Calu3 (cell line): ENCODE measurements at regions of chr4 and their contacts with region 1.

Region 1: GRCh38 chr4:53804719-53805118 is 213.4 kb upstream of the LNX1 start:
- DNase-seq: peak; percentile 54
- H3K4me3 Mint-ChIP-seq: no peak overlapping the region
- H3K27ac Mint-ChIP-seq: no peak overlapping the region
- H3K4me1 Mint-ChIP-seq: no peaks in the 10 kb centered on the region
- H3K27me3 Mint-ChIP-seq: peaks cover 40% of the 10 kb centered on the region
- CTCF ChIP-seq: no peak

Region 2: DNA sequence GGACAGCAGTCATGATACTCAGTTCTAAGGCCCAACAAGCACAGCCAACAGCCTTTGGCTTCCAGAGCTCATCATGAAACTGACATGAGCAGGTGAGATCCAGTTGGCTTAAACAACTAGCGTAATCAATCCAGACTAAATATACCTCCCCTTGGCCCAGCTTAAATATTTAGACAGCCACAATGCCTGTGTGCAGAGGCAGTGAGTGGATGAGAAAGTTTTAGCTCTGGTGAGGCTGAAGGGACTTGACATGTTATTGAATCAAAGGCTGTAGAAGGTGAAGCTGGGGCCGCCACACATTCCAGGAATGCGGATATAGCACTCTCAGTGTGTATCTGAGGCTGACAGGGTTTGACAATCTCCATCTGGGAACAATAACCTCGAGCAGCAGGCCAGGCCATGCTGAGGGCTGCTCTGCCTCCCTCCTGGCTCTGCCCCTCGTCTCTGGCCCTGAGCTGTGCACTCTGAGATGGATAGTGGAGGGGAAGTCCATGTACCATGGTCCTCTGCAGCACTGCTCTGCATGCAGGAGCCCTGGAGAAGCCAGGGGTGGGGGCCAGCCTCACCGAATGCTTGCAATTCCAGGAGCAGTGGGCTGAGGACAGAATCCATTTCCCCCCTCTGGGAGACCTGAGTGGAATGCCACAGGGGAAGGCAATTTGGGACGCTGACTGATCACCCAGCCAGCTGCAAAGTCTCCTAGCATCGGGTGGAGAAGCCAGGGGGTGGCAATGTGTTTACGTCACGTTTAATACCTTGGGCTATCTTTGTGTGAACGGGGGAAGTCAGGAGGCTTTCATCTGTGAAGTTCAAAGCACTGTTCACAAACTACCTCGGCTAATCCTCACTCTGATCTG is 979.9 kb before region 1 on chr4:
- CTCF ChIA-PET with region 1: no interaction called
- intact Hi-C with region 1: no loop called
- DNase-seq: peak; percentile 22
- H3K4me3 Mint-ChIP-seq: no peak overlapping the region
- H3K27ac Mint-ChIP-seq: no peak overlapping the region
- H3K4me1 Mint-ChIP-seq: peaks cover 26% of the 10 kb centered on the region
- H3K27me3 Mint-ChIP-seq: no peaks in the 10 kb centered on the region
- CTCF ChIP-seq: no peak

Region 3: DNA sequence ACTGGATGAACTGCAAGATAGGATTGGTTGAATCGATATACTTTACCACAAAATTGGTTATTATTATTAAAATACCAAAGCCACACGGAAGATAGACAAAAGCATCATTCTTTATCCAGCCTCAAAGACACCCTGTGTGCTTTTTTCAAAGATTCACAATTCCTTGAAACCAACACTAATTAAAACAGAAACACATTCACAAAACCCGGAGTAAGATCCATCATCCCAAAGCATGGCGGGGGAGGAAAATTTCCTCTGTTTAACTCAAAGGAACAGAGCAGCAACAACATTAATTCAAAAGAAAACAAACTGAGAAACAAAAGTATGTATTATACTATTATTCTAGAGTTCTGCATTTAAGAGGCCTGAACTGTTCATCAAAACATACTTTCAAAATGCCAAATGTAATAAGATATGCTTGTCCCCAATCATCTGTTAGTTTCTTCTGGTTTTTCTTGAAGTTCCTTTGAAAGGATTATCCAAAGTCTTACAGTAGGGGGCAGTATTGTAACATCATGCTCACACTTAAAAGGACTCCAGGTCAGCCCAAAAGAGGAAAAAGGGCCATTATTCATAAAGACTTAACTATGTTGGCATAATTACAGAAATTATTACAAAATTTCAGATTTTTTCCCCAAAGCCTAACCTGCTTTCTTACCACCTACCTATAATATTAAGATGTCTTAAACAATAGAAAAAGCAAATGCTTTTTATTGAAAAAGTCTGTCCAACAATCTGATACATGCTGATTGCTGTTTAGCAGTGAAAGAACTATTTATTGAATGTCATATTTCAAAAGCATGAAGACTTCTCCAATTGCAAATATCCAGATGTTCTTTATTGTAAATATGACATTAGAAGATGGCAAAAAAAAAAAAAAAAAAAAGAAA is 607.6 kb before region 1 on chr4:
- CTCF ChIA-PET with region 1: no interaction called
- intact Hi-C with region 1: loop called (anchors 5 kb)
- DNase-seq: peak; percentile 9
- H3K4me3 Mint-ChIP-seq: no peak overlapping the region
- H3K27ac Mint-ChIP-seq: no peak overlapping the region
- H3K4me1 Mint-ChIP-seq: no peaks in the 10 kb centered on the region
- H3K27me3 Mint-ChIP-seq: no peaks in the 10 kb centered on the region
- CTCF ChIP-seq: peak; percentile 41

Region 4: GRCh38 chr4:53490965-53491622 is 313.6 kb before region 1 on chr4:
- CTCF ChIA-PET with region 1: no interaction called
- intact Hi-C with region 1: loop called (anchors 5 kb)
- DNase-seq: peak; percentile 22
- H3K4me3 Mint-ChIP-seq: no peak overlapping the region
- H3K27ac Mint-ChIP-seq: no peak overlapping the region
- H3K4me1 Mint-ChIP-seq: no peaks in the 10 kb centered on the region
- H3K27me3 Mint-ChIP-seq: no peaks in the 10 kb centered on the region
- CTCF ChIP-seq: peak; percentile 44

Region 5: GRCh38 chr4:53502094-53502493 is 302.6 kb before region 1 on chr4:
- CTCF ChIA-PET with region 1: no interaction called
- intact Hi-C with region 1: no loop called
- DNase-seq: no peak
- H3K4me3 Mint-ChIP-seq: no peak overlapping the region
- H3K27ac Mint-ChIP-seq: no peak overlapping the region
- H3K4me1 Mint-ChIP-seq: no peaks in the 10 kb centered on the region
- H3K27me3 Mint-ChIP-seq: no peaks in the 10 kb centered on the region
- CTCF ChIP-seq: no peak

Region 6: GRCh38 chr4:53763813-53764597 is 40.7 kb before region 1 on chr4:
- CTCF ChIA-PET with region 1: no interaction called
- intact Hi-C with region 1: no loop called
- DNase-seq: no peak
- H3K4me3 Mint-ChIP-seq: no peak overlapping the region
- H3K27ac Mint-ChIP-seq: no peak overlapping the region
- H3K4me1 Mint-ChIP-seq: no peaks in the 10 kb centered on the region
- H3K27me3 Mint-ChIP-seq: no peaks in the 10 kb centered on the region
- CTCF ChIP-seq: no peak

Region 7: GRCh38 chr4:54155936-54156335 is 351.2 kb after region 1 on chr4:
- CTCF ChIA-PET with region 1: no interaction called
- intact Hi-C with region 1: no loop called
- DNase-seq: no peak
- H3K4me3 Mint-ChIP-seq: no peak overlapping the region
- H3K27ac Mint-ChIP-seq: no peak overlapping the region
- H3K4me1 Mint-ChIP-seq: no peaks in the 10 kb centered on the region
- H3K27me3 Mint-ChIP-seq: no peaks in the 10 kb centered on the region
- CTCF ChIP-seq: no peak